Heart left ventricle (tissue), 16 donors: ENCODE measurements at regions of chr4 and their contacts with region 1.

Region 1: GRCh38 chr4:159446266-159446976 is 343.5 kb downstream of the RAPGEF2 start:
- DNase-seq: peak in 4 of 5 donors; percentile 21 to 41 (median 36)
- ATAC-seq: peak; percentile 94 to 98 (median 97)
- H3K4me3 ChIP-seq: no peak overlapping the region
- H3K27ac ChIP-seq: peak overlapping the region in 3 of 12 donors; percentile 2 to 46 (median 39)
- H3K4me1 ChIP-seq: peaks cover 0 to 15% (median 8%) of the 10 kb centered on the region in 12 donors
- H3K27me3 ChIP-seq: no peaks in the 10 kb centered on the region
- CTCF ChIP-seq: peak; percentile 82 to 96 (median 91)
- POLR2A ChIP-seq: no peak

Region 2: DNA sequence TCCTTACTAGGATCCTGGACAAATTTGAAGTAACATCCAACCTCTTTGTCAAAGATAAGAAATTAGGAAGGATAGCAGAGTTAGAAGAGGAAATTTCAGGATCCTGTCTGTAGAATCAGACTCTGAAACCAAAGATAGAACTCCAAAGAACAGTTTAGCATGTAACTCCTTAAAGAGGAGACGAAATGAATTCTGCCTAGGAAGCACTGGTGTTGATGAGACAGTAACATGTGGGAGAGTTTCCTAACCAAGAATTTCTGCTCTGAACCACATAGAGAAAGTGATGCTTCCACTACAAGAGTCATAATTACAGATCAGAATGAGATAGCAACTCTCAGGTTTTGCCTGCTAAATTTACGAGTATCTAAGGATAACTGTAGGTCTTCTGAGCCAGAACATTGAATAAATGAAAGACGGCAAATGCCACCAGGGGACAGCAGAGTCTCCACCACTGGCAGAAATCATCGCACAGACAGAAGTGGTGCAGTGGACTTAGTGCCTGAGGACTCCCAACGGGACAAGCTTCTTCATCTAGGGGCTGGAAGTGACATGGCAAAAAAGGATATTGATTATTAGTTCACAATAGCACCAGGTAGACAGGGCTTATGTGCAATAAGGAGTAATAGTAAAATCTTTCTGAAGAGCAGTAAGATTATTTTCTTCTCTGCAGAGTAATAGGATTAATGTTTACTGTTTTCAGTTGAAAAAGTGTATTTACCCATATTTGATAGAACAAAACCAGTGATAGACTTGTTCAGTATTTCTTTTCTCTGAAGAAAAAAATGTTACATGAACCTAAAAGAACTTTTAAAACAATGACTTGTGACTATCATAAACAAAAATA is 716.5 kb before region 1 on chr4:
- intact Hi-C with region 1: loop called in 6 of 10 experiments (anchors 5 to 10 kb)
- DNase-seq: peak in 4 of 5 donors; percentile 66 to 75 (median 68)
- ATAC-seq: peak; percentile 88 to 97 (median 94)
- H3K4me3 ChIP-seq: no peak overlapping the region
- H3K27ac ChIP-seq: no peak overlapping the region
- H3K4me1 ChIP-seq: peaks cover 0 to 6% (median 0%) of the 10 kb centered on the region in 12 donors
- H3K27me3 ChIP-seq: no peaks in the 10 kb centered on the region
- CTCF ChIP-seq: peak; percentile 80 to 98 (median 90)
- POLR2A ChIP-seq: no peak

Region 3: GRCh38 chr4:159102622-159103383 is 343.6 kb before region 1 on chr4 and contains the start of gene RAPGEF2:
- intact Hi-C with region 1: loop called in 2 of 10 experiments (anchors 10 kb)
- DNase-seq: peak; percentile 95
- ATAC-seq: peak; percentile 95 to 96 (median 96)
- H3K4me3 ChIP-seq: peak within 1 kb of the TSS; percentile 85 to 99 (median 97)
- H3K27ac ChIP-seq: peak within 1 kb of the TSS; percentile 88 to 98 (median 96)
- H3K4me1 ChIP-seq: peaks cover 0 to 38% (median 25%) of the 10 kb centered on the region in 12 donors
- H3K27me3 ChIP-seq: no peaks in the 10 kb centered on the region
- CTCF ChIP-seq: peak in 1 of 12 donors; percentile 9
- POLR2A ChIP-seq: peak; percentile 93 to 99
- total RNA-seq, gene RAPGEF2: 35.3 to 75.9 (median 56.9) TPM

Region 4: DNA sequence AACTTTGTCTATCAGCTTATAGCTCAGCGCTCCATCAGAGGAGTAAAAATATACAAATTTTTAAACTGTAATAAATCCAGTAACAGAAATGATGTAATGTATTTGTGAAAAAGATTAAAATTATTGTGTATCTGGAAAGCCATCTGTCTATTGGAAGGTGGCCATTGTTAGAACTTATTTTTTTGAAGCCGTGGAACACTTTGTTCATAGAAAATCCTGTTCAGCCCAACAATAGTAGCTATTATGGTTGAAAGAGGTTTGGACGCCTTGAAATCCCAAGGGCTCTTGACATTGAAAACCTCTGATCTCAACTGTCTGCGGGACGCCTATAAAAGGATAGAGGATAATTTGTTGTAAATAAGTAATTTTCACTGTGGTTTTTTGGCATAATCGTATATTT is 245.3 kb before region 1 on chr4:
- intact Hi-C with region 1: loop called (anchors 2 to 10 kb)
- DNase-seq: no peak
- ATAC-seq: peak; percentile 25 to 54 (median 42)
- H3K4me3 ChIP-seq: peak overlapping the region in 3 of 12 donors; percentile 1 to 3 (median 2)
- H3K27ac ChIP-seq: peak overlapping the region; percentile 35 to 79 (median 71)
- H3K4me1 ChIP-seq: peaks cover 6 to 80% (median 52%) of the 10 kb centered on the region in 12 donors
- H3K27me3 ChIP-seq: no peaks in the 10 kb centered on the region
- CTCF ChIP-seq: no peak
- POLR2A ChIP-seq: no peak

Region 5: DNA sequence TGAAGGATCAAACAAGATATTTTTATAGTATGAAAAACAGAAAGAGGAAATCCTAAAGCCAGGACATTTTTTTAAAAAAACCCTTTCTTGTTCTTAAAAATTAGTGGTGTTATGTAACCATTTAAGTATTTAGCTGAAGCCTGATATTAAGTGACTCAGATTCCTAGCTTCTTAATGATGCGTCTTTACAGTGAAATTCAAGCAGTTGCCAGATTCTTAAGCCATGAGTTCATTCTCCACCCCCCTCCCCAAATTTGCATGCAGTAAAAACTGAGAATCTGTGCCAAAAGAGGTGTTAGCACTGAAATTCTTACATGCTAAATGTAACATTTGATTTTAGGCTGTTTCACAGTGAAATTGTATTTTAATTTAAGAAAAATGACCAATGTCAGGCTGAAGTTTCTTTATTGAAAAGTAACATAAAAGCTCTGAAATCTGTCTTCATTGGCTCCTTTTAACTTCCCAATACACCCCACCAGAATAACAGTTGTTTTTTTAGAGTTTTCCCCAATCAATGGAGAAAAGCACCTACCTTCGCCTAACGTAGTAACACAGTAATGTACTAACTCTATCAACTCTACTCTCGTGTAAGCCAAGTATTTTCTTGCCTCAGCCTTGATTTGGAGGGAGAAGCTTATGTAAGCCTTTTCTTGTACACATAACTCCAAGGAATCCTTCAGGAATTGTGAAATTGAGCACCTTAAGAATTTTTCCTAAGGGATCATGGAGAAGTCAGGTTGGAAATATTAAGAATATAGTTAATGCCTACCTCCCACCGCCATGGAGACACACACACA is 162.5 kb before region 1 on chr4:
- intact Hi-C with region 1: loop called in 3 of 10 experiments (anchors 5 to 10 kb)
- DNase-seq: no peak
- ATAC-seq: peak in 2 of 4 donors; percentile 32 to 39
- H3K4me3 ChIP-seq: peak overlapping the region in 3 of 12 donors; percentile 6 to 32 (median 26)
- H3K27ac ChIP-seq: peak overlapping the region in 5 of 12 donors; percentile 0 to 64 (median 1)
- H3K4me1 ChIP-seq: peaks cover 0 to 58% (median 32%) of the 10 kb centered on the region in 12 donors
- H3K27me3 ChIP-seq: no peaks in the 10 kb centered on the region
- CTCF ChIP-seq: no peak
- POLR2A ChIP-seq: no peak

Region 6: GRCh38 chr4:159358226-159358625 is 88.2 kb before region 1 on chr4:
- intact Hi-C with region 1: loop called in 7 of 10 experiments (anchors 5 to 10 kb)
- DNase-seq: no peak
- ATAC-seq: peak in 2 of 4 donors; percentile 14 to 32
- H3K4me3 ChIP-seq: no peak overlapping the region
- H3K27ac ChIP-seq: peak overlapping the region in 8 of 12 donors; percentile 8 to 48 (median 25)
- H3K4me1 ChIP-seq: peaks cover 0 to 31% (median 8%) of the 10 kb centered on the region in 12 donors
- H3K27me3 ChIP-seq: no peaks in the 10 kb centered on the region
- CTCF ChIP-seq: no peak
- POLR2A ChIP-seq: no peak

Region 7: DNA sequence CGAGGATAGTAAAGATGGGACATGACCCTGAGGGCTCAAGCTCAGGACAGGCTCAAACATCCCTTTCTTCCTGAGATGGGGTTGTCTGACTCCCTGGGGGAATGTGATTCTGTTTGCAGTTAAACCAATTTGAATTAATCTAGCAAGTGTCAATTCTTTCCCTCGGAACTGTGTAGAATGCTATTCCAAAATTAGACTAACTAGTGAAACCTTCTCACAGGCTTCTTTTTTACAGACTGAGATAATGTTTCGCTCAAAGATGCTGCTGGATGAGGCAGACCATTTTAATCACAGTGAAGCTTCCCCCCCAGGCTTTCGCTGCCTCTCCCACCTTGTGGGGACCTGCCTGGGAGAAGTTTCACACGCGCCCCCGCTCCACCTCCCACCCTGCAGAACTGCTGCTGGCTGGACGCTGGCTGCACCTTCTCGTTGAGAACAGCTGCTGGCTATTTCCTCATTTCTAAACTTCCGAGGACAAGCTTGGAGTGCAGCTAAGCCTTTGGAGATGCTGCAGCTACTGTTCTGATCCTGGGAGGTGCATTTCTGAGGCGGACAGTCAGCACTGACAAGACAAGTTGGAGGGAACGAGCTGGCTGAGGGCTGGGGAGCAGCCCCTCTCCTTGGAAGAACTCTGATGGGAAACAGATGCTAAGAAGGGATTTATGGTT is 45.7 kb before region 1 on chr4:
- intact Hi-C with region 1: loop called in 1 of 10 experiments (anchors 5 kb)
- DNase-seq: peak in 2 of 5 donors; percentile 24 to 48
- ATAC-seq: peak in 3 of 4 donors; percentile 18 to 38 (median 24)
- H3K4me3 ChIP-seq: peak overlapping the region in 9 of 12 donors; percentile 10 to 46 (median 23)
- H3K27ac ChIP-seq: peak overlapping the region; percentile 41 to 88 (median 62)
- H3K4me1 ChIP-seq: peaks cover 0 to 62% (median 27%) of the 10 kb centered on the region in 12 donors
- H3K27me3 ChIP-seq: no peaks in the 10 kb centered on the region
- CTCF ChIP-seq: no peak
- POLR2A ChIP-seq: no peak